Colonic mucosa (tissue), 4 donors: ENCODE measurements at regions of chr7 and their contacts with region 1.

Region 1: DNA sequence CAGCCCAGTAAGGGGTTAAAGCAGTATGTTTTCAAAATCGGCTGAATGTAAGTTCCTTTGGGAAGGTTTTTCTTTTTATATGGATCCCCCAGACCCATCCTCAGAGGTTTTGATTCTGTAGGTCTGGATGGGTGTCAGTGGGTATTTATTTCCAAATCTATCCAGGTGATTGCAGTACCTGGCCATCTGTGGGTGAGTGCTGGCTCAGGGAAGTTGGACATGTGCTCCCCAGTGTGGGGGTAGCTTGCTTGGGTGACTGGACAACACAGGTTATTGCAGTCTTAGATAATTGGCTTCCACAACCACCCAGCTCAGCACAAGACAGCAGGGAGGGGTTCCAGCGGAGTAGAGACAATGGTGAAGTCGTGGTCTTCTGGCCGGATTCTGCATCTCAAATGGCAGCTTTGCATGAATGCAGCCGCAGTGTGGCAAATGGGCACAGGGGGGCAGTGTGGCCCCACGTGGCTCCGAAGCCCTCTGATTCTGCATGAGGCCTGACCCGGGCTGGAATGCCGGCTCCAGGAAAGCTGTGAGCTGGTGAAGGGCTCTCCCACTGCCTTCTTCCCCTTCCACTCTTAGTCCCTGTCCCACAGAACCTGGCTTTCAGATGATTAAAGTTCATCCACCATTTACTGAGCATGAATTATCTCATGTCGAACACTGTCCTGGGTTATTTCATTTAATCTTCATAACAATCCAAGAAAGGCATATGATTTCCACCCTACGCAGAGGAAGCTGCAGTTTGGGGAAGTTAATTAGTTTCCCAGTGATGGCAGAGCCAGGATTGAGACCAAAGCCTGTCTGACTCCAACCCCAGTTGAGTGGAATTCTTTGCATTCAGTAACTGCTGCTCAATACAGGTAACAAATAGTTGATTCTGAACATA is 64.5 kb upstream of the SYPL1 start:
- DNase-seq: peak; percentile 83
- H3K4me3 ChIP-seq: no peak overlapping the region
- H3K27ac ChIP-seq: no peak overlapping the region
- H3K4me1 ChIP-seq: no peaks in the 10 kb centered on the region
- H3K27me3 ChIP-seq: no peaks in the 10 kb centered on the region
- CTCF ChIP-seq: peak; percentile 91

Region 2: GRCh38 chr7:105245398-105246114 is 931.1 kb before region 1 on chr7:
- intact Hi-C with region 1: no loop called
- DNase-seq: no peak
- H3K4me3 ChIP-seq: no peak overlapping the region
- H3K27ac ChIP-seq: no peak overlapping the region
- H3K4me1 ChIP-seq: no peaks in the 10 kb centered on the region
- H3K27me3 ChIP-seq: no peaks in the 10 kb centered on the region
- CTCF ChIP-seq: no peak

Region 3: GRCh38 chr7:106367018-106367420 is 190.4 kb after region 1 on chr7:
- intact Hi-C with region 1: loop called (anchors 5 kb)
- DNase-seq: no peak
- H3K4me3 ChIP-seq: no peak overlapping the region
- H3K27ac ChIP-seq: no peak overlapping the region
- H3K4me1 ChIP-seq: no peaks in the 10 kb centered on the region
- H3K27me3 ChIP-seq: no peaks in the 10 kb centered on the region
- CTCF ChIP-seq: peak; percentile 19

Region 4: DNA sequence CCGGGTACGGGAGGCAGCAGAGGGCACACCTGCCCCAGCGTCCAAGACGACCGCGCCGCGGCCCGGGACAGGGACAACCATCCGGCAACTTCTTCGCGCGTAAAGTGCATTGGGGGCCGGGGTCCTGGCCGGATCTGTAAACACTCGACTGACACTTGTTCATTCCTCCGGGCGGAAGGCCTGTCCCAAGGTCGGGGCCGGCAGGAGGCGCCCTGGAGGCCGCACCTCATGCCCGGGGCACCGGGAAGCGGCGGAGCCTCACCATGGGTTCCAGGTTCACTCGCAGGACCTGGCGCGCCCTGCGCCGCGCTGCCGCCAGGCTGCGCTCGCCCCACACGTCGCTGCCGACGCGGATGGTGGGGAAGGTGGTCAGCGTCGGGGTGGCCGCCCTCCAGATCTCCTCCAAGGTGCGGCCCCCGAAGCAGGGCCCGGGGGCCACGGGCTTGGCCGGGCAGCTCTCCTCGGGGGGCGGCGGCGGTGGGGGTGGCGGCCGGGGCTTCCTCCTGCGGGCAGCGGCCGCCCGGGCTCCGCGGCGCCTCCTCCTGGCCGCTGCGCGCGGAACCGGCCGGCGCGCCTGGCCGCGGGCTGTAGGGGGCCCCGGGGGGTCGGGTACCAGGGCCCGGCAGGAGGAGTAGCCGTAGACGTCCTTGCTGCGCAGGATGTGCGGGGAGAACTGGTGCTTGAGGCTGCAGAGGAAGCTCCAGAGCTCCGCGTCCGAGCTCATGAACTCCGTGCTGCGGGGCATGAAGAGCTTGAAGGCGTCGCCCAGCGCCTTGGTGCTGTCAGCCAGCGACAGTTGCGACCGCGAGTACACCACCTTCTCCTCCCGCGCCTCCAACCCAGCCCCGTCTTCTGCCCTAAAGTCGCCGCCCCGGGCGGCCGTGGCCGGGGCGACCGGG is 483.6 kb after region 1 on chr7:
- intact Hi-C with region 1: no loop called
- DNase-seq: peak; percentile 81
- H3K4me3 ChIP-seq: peak overlapping the region; percentile 87
- H3K27ac ChIP-seq: peak overlapping the region; percentile 92
- H3K4me1 ChIP-seq: no peaks in the 10 kb centered on the region
- H3K27me3 ChIP-seq: no peaks in the 10 kb centered on the region
- CTCF ChIP-seq: peak; percentile 70